Naive thymus-derived CD4-positive, alpha-beta T cell (primary cell): ENCODE measurements at regions of chr1 and their contacts with region 1.

Region 1: GRCh38 chr1:222829868-222830267 is 15.0 kb downstream of the DISP1 start:
- DNase-seq: no peak
- ATAC-seq: no peak
- H3K4me3 ChIP-seq: no peak overlapping the region
- H3K4me3 Mint-ChIP-seq: no peak overlapping the region
- H3K27ac ChIP-seq: no peak overlapping the region
- H3K27ac Mint-ChIP-seq: peak overlapping the region in 1 of 9 donors; percentile 67
- H3K4me1 ChIP-seq: no peaks in the 10 kb centered on the region
- H3K4me1 Mint-ChIP-seq: peaks cover 0 to 20% (median 3%) of the 10 kb centered on the region in 7 donors
- H3K27me3 ChIP-seq: no peaks in the 10 kb centered on the region
- H3K27me3 Mint-ChIP-seq: no peaks in the 10 kb centered on the region

Region 2: GRCh38 chr1:221777431-221778072 is 1052.3 kb before region 1 on chr1:
- CTCF ChIA-PET with region 1: no interaction called
- POLR2A ChIA-PET with region 1: no interaction called
- intact Hi-C with region 1: no loop called
- DNase-seq: peak in 7 of 9 donors; percentile 14 to 58 (median 32)
- ATAC-seq: peak; percentile 79
- H3K4me3 ChIP-seq: peak overlapping the region; percentile 19
- H3K4me3 Mint-ChIP-seq: peak overlapping the region; percentile 1 to 82 (median 56)
- H3K27ac ChIP-seq: no peak overlapping the region
- H3K27ac Mint-ChIP-seq: peak overlapping the region; percentile 56 to 90 (median 74)
- H3K4me1 ChIP-seq: peaks cover 37 to 38% of the 10 kb centered on the region in 2 donors
- H3K4me1 Mint-ChIP-seq: peaks cover 40 to 83% (median 51%) of the 10 kb centered on the region in 7 donors
- H3K27me3 ChIP-seq: no peaks in the 10 kb centered on the region
- H3K27me3 Mint-ChIP-seq: no peaks in the 10 kb centered on the region

Region 3: DNA sequence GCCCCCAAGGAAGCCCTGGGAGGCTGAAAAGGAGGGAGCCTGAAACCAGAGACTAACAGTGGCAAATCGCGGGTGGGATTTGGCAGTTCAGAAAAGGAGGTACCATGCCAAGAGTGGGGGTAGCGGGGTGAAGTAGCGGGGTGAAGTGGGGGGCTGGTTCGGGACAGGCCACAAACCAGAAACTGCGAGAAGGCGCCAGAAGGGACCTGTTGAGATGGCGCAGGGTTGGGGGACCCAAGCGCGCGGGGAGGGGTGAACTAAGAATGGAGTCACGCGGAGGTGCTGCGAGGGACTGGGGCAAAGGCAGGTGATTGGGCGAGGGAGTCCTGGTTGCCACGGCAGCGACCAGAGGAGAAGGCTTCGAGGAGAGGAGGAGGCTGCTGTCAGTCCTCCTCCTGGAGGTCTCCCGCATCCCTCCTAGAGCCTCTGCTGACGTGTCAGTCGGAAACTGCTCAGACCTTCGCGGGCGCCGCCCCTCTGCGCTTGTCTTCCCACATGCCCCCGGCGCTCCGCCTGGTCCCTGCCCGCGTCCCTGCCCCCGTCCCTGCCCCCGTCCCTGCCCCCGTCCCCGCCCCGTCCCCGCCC is 212.4 kb before region 1 on chr1:
- CTCF ChIA-PET with region 1: no interaction called
- POLR2A ChIA-PET with region 1: no interaction called
- intact Hi-C with region 1: no loop called
- DNase-seq: peak; percentile 81 to 98 (median 89)
- ATAC-seq: peak; percentile 93
- H3K4me3 ChIP-seq: peak overlapping the region; percentile 74
- H3K4me3 Mint-ChIP-seq: peak overlapping the region; percentile 89 to 95 (median 93)
- H3K27ac ChIP-seq: peak overlapping the region; percentile 74
- H3K27ac Mint-ChIP-seq: peak overlapping the region; percentile 90 to 97 (median 95)
- H3K4me1 ChIP-seq: peaks cover 18 to 22% of the 10 kb centered on the region in 2 donors
- H3K4me1 Mint-ChIP-seq: peaks cover 14 to 39% (median 32%) of the 10 kb centered on the region in 7 donors
- H3K27me3 ChIP-seq: no peaks in the 10 kb centered on the region
- H3K27me3 Mint-ChIP-seq: peaks cover 5 to 51% (median 26%) of the 10 kb centered on the region in 5 donors

Region 4: DNA sequence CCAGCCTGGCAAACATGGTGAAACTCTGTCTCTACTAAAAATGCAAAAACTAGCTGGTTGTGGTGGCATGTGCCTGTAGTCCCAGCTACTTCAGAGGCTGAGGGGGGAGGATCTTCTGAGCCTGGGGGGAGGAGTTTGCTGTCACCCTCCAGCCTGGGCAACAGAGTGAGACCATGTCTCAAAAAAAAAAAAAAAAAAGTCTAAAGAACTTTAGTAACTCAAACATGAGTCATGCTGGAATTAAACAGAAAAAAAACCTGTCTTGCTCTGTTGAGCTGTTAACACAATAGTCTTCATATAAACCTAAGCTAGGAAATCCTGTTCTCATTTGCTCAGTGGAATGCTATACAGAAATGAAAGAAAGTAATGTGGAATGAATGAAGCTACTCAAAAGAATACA is 31.8 kb before region 1 on chr1:
- CTCF ChIA-PET with region 1: no interaction called
- POLR2A ChIA-PET with region 1: no interaction called
- intact Hi-C with region 1: loop called in 1 of 2 experiments (anchors 1 kb)
- DNase-seq: no peak
- ATAC-seq: no peak
- H3K4me3 ChIP-seq: no peak overlapping the region
- H3K4me3 Mint-ChIP-seq: no peak overlapping the region
- H3K27ac ChIP-seq: no peak overlapping the region
- H3K27ac Mint-ChIP-seq: no peak overlapping the region
- H3K4me1 ChIP-seq: no peaks in the 10 kb centered on the region
- H3K4me1 Mint-ChIP-seq: peaks cover 0 to 12% (median 5%) of the 10 kb centered on the region in 7 donors
- H3K27me3 ChIP-seq: no peaks in the 10 kb centered on the region
- H3K27me3 Mint-ChIP-seq: peaks cover 0 to 13% (median 0%) of the 10 kb centered on the region in 5 donors

Region 5: GRCh38 chr1:222953585-222953984 is 123.7 kb after region 1 on chr1:
- CTCF ChIA-PET with region 1: no interaction called
- POLR2A ChIA-PET with region 1: no interaction called
- intact Hi-C with region 1: no loop called
- DNase-seq: no peak
- ATAC-seq: no peak
- H3K4me3 ChIP-seq: no peak overlapping the region
- H3K4me3 Mint-ChIP-seq: no peak overlapping the region
- H3K27ac ChIP-seq: no peak overlapping the region
- H3K27ac Mint-ChIP-seq: no peak overlapping the region
- H3K4me1 ChIP-seq: no peaks in the 10 kb centered on the region
- H3K4me1 Mint-ChIP-seq: peaks cover 0 to 4% (median 0%) of the 10 kb centered on the region in 7 donors
- H3K27me3 ChIP-seq: no peaks in the 10 kb centered on the region
- H3K27me3 Mint-ChIP-seq: no peaks in the 10 kb centered on the region

Region 6: GRCh38 chr1:223052931-223053330 is 223.1 kb after region 1 on chr1:
- CTCF ChIA-PET with region 1: no interaction called
- POLR2A ChIA-PET with region 1: no interaction called
- intact Hi-C with region 1: no loop called
- DNase-seq: no peak
- ATAC-seq: no peak
- H3K4me3 ChIP-seq: no peak overlapping the region
- H3K4me3 Mint-ChIP-seq: no peak overlapping the region
- H3K27ac ChIP-seq: no peak overlapping the region
- H3K27ac Mint-ChIP-seq: no peak overlapping the region
- H3K4me1 ChIP-seq: no peaks in the 10 kb centered on the region
- H3K4me1 Mint-ChIP-seq: no peaks in the 10 kb centered on the region
- H3K27me3 ChIP-seq: no peaks in the 10 kb centered on the region
- H3K27me3 Mint-ChIP-seq: peaks cover 0 to 10% (median 4%) of the 10 kb centered on the region in 5 donors